Activated naive CD8-positive, alpha-beta T cell treated with anti-CD3 and anti-CD28 coated beads, Interleukin-2, amount 10 ng/mL, durations not matched to agents 7 days and 5 days (primary cell): ENCODE measurements at regions of chr6 and their contacts with region 1.

Region 1: DNA sequence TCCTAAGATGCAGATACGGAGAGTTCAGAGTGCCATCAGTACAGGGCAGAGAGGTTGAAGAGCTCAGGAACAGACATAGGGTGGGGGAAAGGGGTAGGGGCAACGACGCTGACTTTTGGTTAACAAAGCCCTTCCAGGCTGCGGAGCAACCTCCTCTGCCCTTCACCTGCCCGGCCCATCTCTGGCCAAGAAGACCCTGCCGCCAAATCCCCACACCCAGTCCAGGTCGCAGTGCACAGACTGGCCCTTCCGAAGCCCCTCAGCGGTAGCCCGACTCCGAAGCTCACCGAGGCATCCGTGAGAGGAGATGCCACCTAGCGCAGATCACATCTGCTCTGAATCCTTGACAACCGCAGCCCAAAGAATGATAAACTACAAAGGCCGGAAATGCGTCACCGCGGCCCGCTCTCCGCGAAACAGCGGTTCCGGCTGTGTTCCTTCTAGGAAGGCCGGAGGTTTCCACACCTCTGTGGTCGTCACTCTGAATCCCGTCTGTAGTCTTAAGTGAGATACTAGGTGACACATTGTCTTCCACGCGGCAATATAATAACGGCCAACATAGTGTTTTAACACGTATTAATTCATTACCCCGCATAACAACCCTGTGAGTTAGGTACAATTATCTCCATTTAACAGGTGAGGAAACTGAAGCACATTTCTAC is at the start of gene ZSCAN23:
- DNase-seq: peak; percentile 89
- ATAC-seq: peak; percentile 88
- H3K4me3 Mint-ChIP-seq: peak within 1 kb of the TSS; percentile 95
- H3K27ac Mint-ChIP-seq: peak within 1 kb of the TSS; percentile 98
- H3K4me1 Mint-ChIP-seq: peaks cover 44% of the 10 kb centered on the region
- H3K27me3 Mint-ChIP-seq: peaks cover 3% of the 10 kb centered on the region
- total RNA-seq, gene ZSCAN23: 1.3 to 2.9 TPM

Region 2: GRCh38 chr6:28399350-28400121 is 43.7 kb before region 1 on chr6 and contains the start of gene ZSCAN12:
- POLR2A ChIA-PET with region 1: interaction called, 17 read pairs
- DNase-seq: peak; percentile 90
- ATAC-seq: peak; percentile 89
- H3K4me3 Mint-ChIP-seq: peak within 1 kb of the TSS; percentile 90
- H3K27ac Mint-ChIP-seq: peak within 1 kb of the TSS; percentile 91
- H3K4me1 Mint-ChIP-seq: peaks cover 50% of the 10 kb centered on the region
- H3K27me3 Mint-ChIP-seq: peaks cover 8% of the 10 kb centered on the region
- total RNA-seq, gene ZSCAN12: 13.9 to 15.0 TPM

Region 3: DNA sequence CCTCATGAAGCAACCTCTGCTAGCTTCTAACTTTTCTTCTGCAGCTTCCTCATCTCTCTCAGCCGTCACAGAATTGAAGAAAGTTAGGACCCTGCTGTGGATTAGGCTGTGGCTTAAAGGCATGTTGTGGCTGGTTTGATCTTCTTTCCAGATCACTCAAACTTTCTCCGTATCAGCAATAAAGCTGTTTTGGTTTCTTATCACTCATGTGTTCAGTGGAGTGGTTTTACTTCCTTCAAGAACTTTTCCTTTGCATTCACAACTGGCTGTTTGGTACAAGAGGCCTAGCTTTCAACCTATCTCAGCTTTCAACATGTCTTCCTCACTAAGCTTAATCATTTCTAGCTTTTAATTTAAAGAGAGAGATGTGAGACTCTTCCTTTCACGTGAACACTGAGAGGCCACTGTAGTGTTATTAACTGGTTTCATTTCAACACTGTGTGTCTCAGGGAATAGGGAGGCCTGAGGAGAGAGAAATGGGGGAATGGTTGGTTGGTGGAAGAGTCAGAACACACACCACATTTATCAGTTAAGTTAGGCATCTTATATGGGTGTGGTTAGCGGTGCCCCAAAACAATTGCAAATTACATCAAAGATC is 17.2 kb before region 1 on chr6:
- POLR2A ChIA-PET with region 1: interaction called, 14 read pairs
- DNase-seq: no peak
- ATAC-seq: peak; percentile 67
- H3K4me3 Mint-ChIP-seq: peak overlapping the region; percentile 70
- H3K27ac Mint-ChIP-seq: peak overlapping the region; percentile 89
- H3K4me1 Mint-ChIP-seq: peaks cover 40% of the 10 kb centered on the region
- H3K27me3 Mint-ChIP-seq: peaks cover 7% of the 10 kb centered on the region